Endothelial cell of umbilical vein (primary cell): ENCODE measurements at regions of chr10 and their contacts with region 1.

Region 1: GRCh38 chr10:98262571-98262970 is 5.4 kb downstream of the LOXL4 start:
- DNase-seq: peak; percentile 38
- H3K4me3 ChIP-seq: no peak overlapping the region
- H3K27ac ChIP-seq: no peak overlapping the region
- H3K4me1 ChIP-seq: no peaks in the 10 kb centered on the region
- H3K27me3 ChIP-seq: no peaks in the 10 kb centered on the region
- CTCF ChIP-seq: peak; percentile 38 to 60
- POLR2A ChIP-seq: no peak

Region 2: GRCh38 chr10:98331885-98332284 is 69.3 kb after region 1 on chr10:
- CTCF ChIA-PET with region 1: interaction called, 4 read pairs
- POLR2A ChIA-PET with region 1: no interaction called
- dilution Hi-C with region 1: no loop called
- intact Hi-C with region 1: loop called (anchors 1 kb)
- DNase-seq: no peak
- H3K4me3 ChIP-seq: no peak overlapping the region
- H3K27ac ChIP-seq: no peak overlapping the region
- H3K4me1 ChIP-seq: no peaks in the 10 kb centered on the region
- H3K27me3 ChIP-seq: peaks cover 3 to 8% of the 10 kb centered on the region in 2 experiments
- CTCF ChIP-seq: peak; percentile 41 to 43
- POLR2A ChIP-seq: no peak

Region 3: GRCh38 chr10:98664331-98665042 is 401.9 kb after region 1 on chr10:
- CTCF ChIA-PET with region 1: interaction called, 3 read pairs
- POLR2A ChIA-PET with region 1: no interaction called
- dilution Hi-C with region 1: no loop called
- intact Hi-C with region 1: loop called (anchors 5 kb)
- DNase-seq: peak; percentile 18
- H3K4me3 ChIP-seq: no peak overlapping the region
- H3K27ac ChIP-seq: no peak overlapping the region
- H3K4me1 ChIP-seq: no peaks in the 10 kb centered on the region
- H3K27me3 ChIP-seq: peaks cover 0 to 1% of the 10 kb centered on the region in 2 experiments
- CTCF ChIP-seq: peak; percentile 64 to 70
- POLR2A ChIP-seq: no peak

Region 4: DNA sequence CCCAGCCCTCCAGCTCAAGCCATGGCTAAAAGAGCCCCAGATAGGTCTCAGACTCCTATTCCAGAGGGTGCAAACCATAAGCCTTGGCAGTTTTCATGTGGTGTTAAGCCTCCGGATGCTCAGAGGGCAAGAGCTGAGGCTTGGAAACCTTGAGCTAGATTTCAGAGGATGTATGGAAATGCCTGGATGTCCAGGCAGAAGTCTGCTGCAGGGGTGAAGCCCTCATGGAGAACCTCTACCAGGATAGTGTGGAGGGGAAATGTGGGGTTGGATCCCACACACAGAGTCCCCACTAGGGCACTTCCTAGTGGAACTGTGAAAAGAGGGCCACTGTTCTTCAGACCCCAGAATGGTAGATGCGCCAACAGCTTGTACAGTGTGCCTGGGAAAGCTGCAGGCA is 986.3 kb after region 1 on chr10:
- CTCF ChIA-PET with region 1: interaction called, 11 read pairs
- POLR2A ChIA-PET with region 1: no interaction called
- dilution Hi-C with region 1: no loop called
- intact Hi-C with region 1: no loop called
- DNase-seq: no peak
- H3K4me3 ChIP-seq: no peak overlapping the region
- H3K27ac ChIP-seq: no peak overlapping the region
- H3K4me1 ChIP-seq: no peaks in the 10 kb centered on the region
- H3K27me3 ChIP-seq: no peaks in the 10 kb centered on the region
- CTCF ChIP-seq: no peak
- POLR2A ChIP-seq: no peak

Region 5: DNA sequence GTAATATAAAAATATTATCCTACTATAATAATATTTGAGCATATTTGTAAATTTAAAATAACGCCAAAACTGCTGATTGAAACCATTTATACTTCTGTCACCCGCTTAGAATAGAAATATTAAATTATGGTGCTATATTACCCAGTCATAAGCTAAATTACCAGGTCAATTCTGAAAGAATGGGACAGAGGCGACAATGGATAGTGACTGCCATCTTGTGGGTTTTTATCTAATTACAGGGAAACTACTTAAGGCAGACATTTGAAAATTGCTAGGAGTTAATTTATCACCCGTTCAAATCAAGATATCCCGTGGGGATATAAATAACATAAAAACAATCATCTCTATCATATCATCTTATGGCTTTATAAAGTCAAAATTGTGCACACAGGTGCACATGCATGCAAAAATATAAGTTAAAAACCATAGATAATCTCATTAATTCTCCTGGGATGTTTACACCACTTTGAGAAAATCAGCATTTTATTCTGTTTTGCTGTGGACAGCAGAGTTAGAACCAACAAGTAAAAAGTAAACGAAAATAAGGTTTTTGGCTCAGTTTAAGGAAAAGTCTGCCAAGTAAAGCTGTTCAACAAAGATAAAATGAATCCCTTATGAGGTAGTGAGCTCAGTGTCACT is 1014.4 kb after region 1 on chr10:
- CTCF ChIA-PET with region 1: interaction called, 10 read pairs
- POLR2A ChIA-PET with region 1: no interaction called
- dilution Hi-C with region 1: no loop called
- intact Hi-C with region 1: no loop called
- DNase-seq: peak; percentile 30
- H3K4me3 ChIP-seq: no peak overlapping the region
- H3K27ac ChIP-seq: no peak overlapping the region
- H3K4me1 ChIP-seq: no peaks in the 10 kb centered on the region
- H3K27me3 ChIP-seq: no peaks in the 10 kb centered on the region
- CTCF ChIP-seq: peak; percentile 18 to 19
- POLR2A ChIP-seq: no peak